Esophagus muscularis mucosa (tissue), 4 donors: ENCODE measurements at regions of chr2 and their contacts with region 1.

Region 1: DNA sequence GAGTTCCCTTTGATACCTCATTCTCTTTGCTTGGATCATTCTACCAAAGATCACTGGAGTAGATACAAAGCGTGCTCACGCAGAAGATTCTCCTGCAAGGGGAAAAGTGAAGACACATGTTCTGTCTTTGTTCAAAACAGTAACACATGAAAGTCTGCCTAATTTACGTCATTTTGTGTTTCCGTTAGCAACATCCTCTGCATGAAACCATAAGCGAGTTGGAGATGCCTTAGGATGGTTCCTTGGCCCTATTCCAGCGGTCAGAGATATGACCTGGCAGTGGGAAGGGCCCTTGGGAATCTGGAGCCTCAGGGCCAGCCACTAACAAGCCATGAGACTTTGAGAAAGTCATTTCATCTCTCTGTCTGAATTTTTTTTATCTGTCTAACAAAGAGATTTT is 180.9 kb upstream of the TWIST2 start:
- DNase-seq: peak; percentile 60
- H3K4me3 ChIP-seq: no peak overlapping the region
- H3K27ac ChIP-seq: no peak overlapping the region
- H3K4me1 ChIP-seq: no peaks in the 10 kb centered on the region
- H3K27me3 ChIP-seq: no peaks in the 10 kb centered on the region
- CTCF ChIP-seq: no peak
- EP300 ChIP-seq: no peak
- POLR2A ChIP-seq: no peak

Region 2: GRCh38 chr2:238425979-238426567 is 240.9 kb before region 1 on chr2:
- intact Hi-C with region 1: no loop called
- DNase-seq: no peak
- H3K4me3 ChIP-seq: peak overlapping the region; percentile 72 to 94 (median 84)
- H3K27ac ChIP-seq: peak overlapping the region; percentile 84 to 96 (median 86)
- H3K4me1 ChIP-seq: peaks cover 24 to 43% (median 33%) of the 10 kb centered on the region in 4 donors
- H3K27me3 ChIP-seq: no peaks in the 10 kb centered on the region
- CTCF ChIP-seq: no peak
- EP300 ChIP-seq: no peak
- POLR2A ChIP-seq: no peak

Region 3: GRCh38 chr2:238731961-238732360 is 65.0 kb after region 1 on chr2:
- intact Hi-C with region 1: no loop called
- DNase-seq: no peak
- H3K4me3 ChIP-seq: no peak overlapping the region
- H3K27ac ChIP-seq: no peak overlapping the region
- H3K4me1 ChIP-seq: peaks cover 20 to 41% (median 37%) of the 10 kb centered on the region in 4 donors
- H3K27me3 ChIP-seq: no peaks in the 10 kb centered on the region
- CTCF ChIP-seq: no peak
- EP300 ChIP-seq: no peak
- POLR2A ChIP-seq: no peak

Region 4: GRCh38 chr2:238777369-238778067 is 110.5 kb after region 1 on chr2:
- intact Hi-C with region 1: no loop called
- DNase-seq: peak; percentile 72
- H3K4me3 ChIP-seq: no peak overlapping the region
- H3K27ac ChIP-seq: no peak overlapping the region
- H3K4me1 ChIP-seq: peaks cover 0 to 1% (median 0%) of the 10 kb centered on the region in 4 donors
- H3K27me3 ChIP-seq: no peaks in the 10 kb centered on the region
- CTCF ChIP-seq: no peak
- EP300 ChIP-seq: no peak
- POLR2A ChIP-seq: no peak

Region 5: GRCh38 chr2:239009599-239010016 is 342.6 kb after region 1 on chr2:
- intact Hi-C with region 1: loop called (anchors 5 kb)
- DNase-seq: no peak
- H3K4me3 ChIP-seq: no peak overlapping the region
- H3K27ac ChIP-seq: no peak overlapping the region
- H3K4me1 ChIP-seq: peaks cover 0 to 17% (median 6%) of the 10 kb centered on the region in 4 donors
- H3K27me3 ChIP-seq: no peaks in the 10 kb centered on the region
- CTCF ChIP-seq: no peak
- EP300 ChIP-seq: no peak
- POLR2A ChIP-seq: no peak

Region 6: DNA sequence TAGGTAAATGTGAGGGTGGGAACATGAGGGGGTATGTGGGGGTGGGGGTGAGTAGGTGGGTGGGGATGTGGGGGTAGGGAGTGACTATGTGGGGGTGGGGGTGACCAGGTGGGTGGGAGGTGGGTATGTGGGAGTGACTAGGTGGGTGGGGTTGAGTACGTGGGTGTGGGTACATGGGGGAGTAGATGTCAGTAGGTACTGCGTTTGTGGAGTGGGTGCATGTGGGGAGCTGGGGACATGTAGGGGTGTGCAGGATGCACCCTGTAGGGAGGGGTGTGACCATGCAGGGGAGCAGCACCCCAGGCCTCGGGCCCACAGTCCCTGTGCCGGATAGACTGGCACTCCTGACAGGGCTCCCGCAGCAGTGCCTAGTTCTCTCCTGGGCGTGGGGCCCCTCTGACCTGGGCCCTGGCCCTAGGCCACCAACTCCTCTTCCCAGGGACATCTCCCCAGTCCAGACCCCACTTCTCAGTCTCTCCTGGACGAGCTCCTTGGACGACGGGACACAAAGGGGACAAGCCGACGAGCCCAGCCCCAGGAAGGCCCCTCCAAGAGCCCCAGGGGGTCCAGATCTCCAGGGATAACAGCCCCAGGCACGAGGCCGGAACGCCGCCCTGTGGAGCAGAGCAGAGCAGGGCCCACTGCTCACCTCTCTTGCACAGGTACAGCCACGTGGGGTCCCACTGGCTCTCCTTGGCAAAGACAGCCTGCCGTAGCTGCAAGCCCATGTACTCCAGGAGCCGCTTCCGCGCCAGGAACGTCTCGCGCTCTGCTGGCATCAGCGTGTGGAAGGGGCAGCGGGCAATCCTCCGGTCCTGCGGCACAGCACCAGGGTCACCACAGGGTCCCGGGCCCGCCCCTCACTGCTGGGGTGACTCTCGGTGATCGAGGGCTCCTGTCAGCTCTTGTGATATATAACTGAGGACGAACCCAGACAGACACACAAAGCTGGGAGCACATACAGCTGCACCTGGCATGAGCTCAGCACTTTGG is 1832.6 kb after region 1 on chr2:
- intact Hi-C with region 1: no loop called
- DNase-seq: peak; percentile 62
- H3K4me3 ChIP-seq: no peak overlapping the region
- H3K27ac ChIP-seq: no peak overlapping the region
- H3K4me1 ChIP-seq: no peaks in the 10 kb centered on the region
- H3K27me3 ChIP-seq: no peaks in the 10 kb centered on the region
- CTCF ChIP-seq: no peak
- EP300 ChIP-seq: no peak
- POLR2A ChIP-seq: no peak